ENCODE measurements at regions of chr11 and their contacts with region 1.

Region 1: DNA sequence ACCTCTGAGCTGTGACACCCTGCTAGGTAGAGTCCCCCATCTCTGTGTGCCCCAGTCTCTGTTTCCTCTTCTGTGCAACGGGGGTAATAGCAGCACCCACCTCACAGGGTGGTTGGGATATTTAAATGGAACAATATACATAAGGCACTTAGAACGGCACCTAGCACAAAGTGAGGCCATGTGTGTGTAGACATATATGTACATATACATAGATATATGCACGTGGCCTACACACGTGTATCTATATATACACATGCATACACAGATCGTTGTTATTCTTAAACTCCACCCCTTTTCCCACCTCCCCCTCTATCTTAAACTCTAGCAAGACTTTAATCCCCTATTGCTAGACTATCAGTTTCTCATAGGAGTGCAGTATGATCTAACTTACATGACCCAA is 2.4 kb downstream of the WNT11 start:
- DNase-seq: no peak
- H3K4me3 ChIP-seq: no peak overlapping the region
- H3K27ac ChIP-seq: no peak overlapping the region
- H3K4me1 ChIP-seq: peaks cover 0 to 5% of the 10 kb centered on the region in 2 donors
- H3K27me3 ChIP-seq: no peaks in the 10 kb centered on the region
- CTCF ChIP-seq: no peak
- POLR2A ChIP-seq: no peak

Region 2: DNA sequence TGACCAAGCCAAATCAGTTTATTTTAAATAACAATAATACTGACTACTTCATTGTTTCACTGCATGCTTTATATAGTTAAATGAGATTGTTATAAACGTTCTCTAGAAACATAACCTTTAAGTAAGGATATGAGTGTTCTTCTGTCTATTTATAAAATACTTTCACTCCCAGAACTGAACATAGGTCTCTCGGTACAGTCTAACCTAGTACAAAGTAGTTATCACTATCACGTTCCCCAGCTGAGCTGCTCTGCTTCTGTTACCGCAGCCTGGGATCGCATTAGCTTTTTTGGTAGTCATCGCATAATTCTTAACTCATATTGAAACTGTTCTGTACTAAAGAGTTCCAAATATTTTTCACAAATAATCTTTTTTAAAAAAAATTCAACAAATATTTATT is 141.2 kb before region 1 on chr11:
- intact Hi-C with region 1: no loop called
- DNase-seq: no peak
- H3K4me3 ChIP-seq: no peak overlapping the region
- H3K27ac ChIP-seq: no peak overlapping the region
- H3K4me1 ChIP-seq: no peaks in the 10 kb centered on the region
- H3K27me3 ChIP-seq: no peaks in the 10 kb centered on the region
- CTCF ChIP-seq: no peak
- POLR2A ChIP-seq: no peak

Region 3: DNA sequence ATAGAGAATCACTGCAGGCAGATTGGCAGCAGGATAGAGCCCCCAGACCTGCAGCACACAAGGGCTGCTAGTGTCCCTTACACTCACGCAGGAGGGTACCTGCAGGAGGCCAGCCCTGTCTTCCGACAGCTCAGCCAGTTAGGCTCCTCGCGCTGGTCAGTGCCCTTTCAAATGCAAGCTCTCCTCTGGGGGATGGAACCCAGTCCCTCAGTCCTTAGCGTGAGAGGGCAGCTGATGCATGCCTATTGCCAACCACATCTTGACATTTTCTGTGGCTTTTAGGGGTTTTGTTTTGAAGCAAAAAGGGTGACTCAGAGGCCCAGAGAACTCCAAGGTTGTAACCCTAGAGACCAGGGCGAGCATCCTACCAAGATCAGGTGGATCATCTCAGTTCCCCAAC is 37.6 kb before region 1 on chr11:
- intact Hi-C with region 1: loop called (anchors 1 kb)
- DNase-seq: no peak
- H3K4me3 ChIP-seq: no peak overlapping the region
- H3K27ac ChIP-seq: no peak overlapping the region
- H3K4me1 ChIP-seq: peaks cover 0 to 4% of the 10 kb centered on the region in 2 donors
- H3K27me3 ChIP-seq: no peaks in the 10 kb centered on the region
- CTCF ChIP-seq: no peak
- POLR2A ChIP-seq: no peak

Region 4: DNA sequence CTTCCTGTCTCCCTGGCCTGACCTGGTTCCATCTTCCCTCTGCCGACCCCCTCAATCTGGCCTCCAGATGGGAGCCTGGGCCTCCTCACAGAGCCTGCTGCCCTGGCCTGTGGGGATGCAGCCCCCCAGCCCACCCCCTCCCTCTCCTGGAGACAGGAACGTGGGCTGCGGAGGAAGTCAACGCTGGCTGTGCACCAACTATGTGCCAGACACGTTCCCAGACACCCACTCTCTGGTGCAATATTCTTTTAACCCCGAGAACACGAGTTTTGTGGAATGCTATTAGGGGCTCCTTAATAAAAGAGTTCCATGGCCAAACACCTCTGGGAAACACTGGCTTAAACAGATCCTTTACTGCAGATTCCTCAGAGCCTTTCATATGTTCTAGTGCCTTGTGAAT is 13.6 kb before region 1 on chr11:
- intact Hi-C with region 1: no loop called
- DNase-seq: no peak
- H3K4me3 ChIP-seq: no peak overlapping the region
- H3K27ac ChIP-seq: peak overlapping the region; percentile 6 to 48
- H3K4me1 ChIP-seq: peaks cover 0 to 4% of the 10 kb centered on the region in 2 donors
- H3K27me3 ChIP-seq: no peaks in the 10 kb centered on the region
- CTCF ChIP-seq: no peak
- POLR2A ChIP-seq: no peak